MCF 10A (cell line): ENCODE measurements at regions of chr10 and their contacts with region 1.

Region 1: GRCh38 chr10:121886997-121887622 is 40.7 kb downstream of the ATE1 start:
- DNase-seq: peak; percentile 74
- H3K4me3 Mint-ChIP-seq: no peak overlapping the region
- H3K27ac Mint-ChIP-seq: peak overlapping the region; percentile 22
- H3K4me1 Mint-ChIP-seq: peaks cover 5% of the 10 kb centered on the region
- H3K27me3 Mint-ChIP-seq: no peaks in the 10 kb centered on the region
- CTCF ChIP-seq: peak; percentile 84

Region 2: GRCh38 chr10:120942806-120943413 is 944.2 kb before region 1 on chr10:
- CTCF ChIA-PET with region 1: interaction called, 50 read pairs
- POLR2A ChIA-PET with region 1: no interaction called
- intact Hi-C with region 1: loop called (anchors 1 kb)
- DNase-seq: peak; percentile 77
- H3K4me3 Mint-ChIP-seq: no peak overlapping the region
- H3K27ac Mint-ChIP-seq: no peak overlapping the region
- H3K4me1 Mint-ChIP-seq: peaks cover 10% of the 10 kb centered on the region
- H3K27me3 Mint-ChIP-seq: no peaks in the 10 kb centered on the region
- CTCF ChIP-seq: peak; percentile 93

Region 3: DNA sequence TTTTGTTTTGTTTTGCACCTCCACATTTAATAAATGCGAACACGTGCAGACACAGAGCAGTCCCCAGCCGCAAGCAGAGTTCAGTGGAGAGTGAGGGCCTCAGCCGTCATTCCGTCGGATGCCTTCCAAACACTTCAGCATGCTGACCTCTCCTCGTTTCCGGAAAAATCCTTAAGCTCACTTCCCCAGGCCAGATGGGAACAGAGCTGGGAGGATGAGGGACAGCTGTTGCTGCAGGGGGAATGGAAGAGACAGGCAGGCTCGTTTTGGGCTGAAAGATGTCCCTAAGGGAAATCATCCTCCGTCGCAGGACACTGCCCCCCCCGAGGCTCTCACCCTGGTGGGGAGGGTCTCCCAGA is 271.7 kb before region 1 on chr10:
- CTCF ChIA-PET with region 1: interaction called, 3 read pairs
- POLR2A ChIA-PET with region 1: no interaction called
- intact Hi-C with region 1: loop called (anchors 10 kb)
- DNase-seq: no peak
- H3K4me3 Mint-ChIP-seq: no peak overlapping the region
- H3K27ac Mint-ChIP-seq: no peak overlapping the region
- H3K4me1 Mint-ChIP-seq: peaks cover 13% of the 10 kb centered on the region
- H3K27me3 Mint-ChIP-seq: no peaks in the 10 kb centered on the region
- CTCF ChIP-seq: no peak

Region 4: DNA sequence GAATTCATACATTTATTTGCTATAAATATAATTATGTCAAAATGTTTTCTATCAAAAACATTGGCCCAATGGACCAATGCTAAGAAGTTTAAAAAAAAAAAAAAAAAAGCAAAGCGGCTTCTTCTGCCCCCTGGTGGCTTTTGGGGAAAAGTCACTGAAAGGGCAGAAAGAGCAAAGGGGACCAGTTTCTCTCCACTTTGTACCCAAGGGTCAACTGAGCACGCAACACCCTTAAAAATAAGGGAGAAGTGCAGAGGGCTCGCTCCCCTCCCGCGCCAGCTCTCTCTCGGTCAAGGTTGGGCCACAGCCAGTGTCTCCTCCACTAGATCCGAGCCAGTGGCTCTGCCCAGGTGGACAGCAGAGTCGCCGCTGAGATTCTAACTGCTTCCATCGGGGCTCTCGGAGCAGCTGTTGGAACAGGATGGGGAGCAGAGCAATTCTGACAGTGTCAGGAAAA is 152.5 kb before region 1 on chr10:
- CTCF ChIA-PET with region 1: interaction called, 4 read pairs
- POLR2A ChIA-PET with region 1: interaction called, 3 read pairs
- intact Hi-C with region 1: loop called (anchors 5 kb)
- DNase-seq: peak; percentile 57
- H3K4me3 Mint-ChIP-seq: no peak overlapping the region
- H3K27ac Mint-ChIP-seq: no peak overlapping the region
- H3K4me1 Mint-ChIP-seq: no peaks in the 10 kb centered on the region
- H3K27me3 Mint-ChIP-seq: no peaks in the 10 kb centered on the region
- CTCF ChIP-seq: peak; percentile 57

Region 5: GRCh38 chr10:121753726-121754476 is 133.2 kb before region 1 on chr10:
- CTCF ChIA-PET with region 1: interaction called, 3 read pairs
- POLR2A ChIA-PET with region 1: no interaction called
- intact Hi-C with region 1: loop called (anchors 5 kb)
- DNase-seq: peak; percentile 84
- H3K4me3 Mint-ChIP-seq: peak overlapping the region; percentile 10
- H3K27ac Mint-ChIP-seq: peak overlapping the region; percentile 81
- H3K4me1 Mint-ChIP-seq: peaks cover 12% of the 10 kb centered on the region
- H3K27me3 Mint-ChIP-seq: no peaks in the 10 kb centered on the region
- CTCF ChIP-seq: no peak

Region 6: GRCh38 chr10:121823993-121824463 is 63.1 kb before region 1 on chr10:
- CTCF ChIA-PET with region 1: interaction called, 7 read pairs
- POLR2A ChIA-PET with region 1: no interaction called
- intact Hi-C with region 1: loop called (anchors 5 kb)
- DNase-seq: peak; percentile 50
- H3K4me3 Mint-ChIP-seq: no peak overlapping the region
- H3K27ac Mint-ChIP-seq: no peak overlapping the region
- H3K4me1 Mint-ChIP-seq: no peaks in the 10 kb centered on the region
- H3K27me3 Mint-ChIP-seq: no peaks in the 10 kb centered on the region
- CTCF ChIP-seq: peak; percentile 64

Region 7: GRCh38 chr10:121900443-121901174 is 13.5 kb after region 1 on chr10:
- CTCF ChIA-PET with region 1: interaction called, 24 read pairs
- POLR2A ChIA-PET with region 1: interaction called, 4 read pairs
- intact Hi-C with region 1: no loop called
- DNase-seq: peak; percentile 69
- H3K4me3 Mint-ChIP-seq: no peak overlapping the region
- H3K27ac Mint-ChIP-seq: no peak overlapping the region
- H3K4me1 Mint-ChIP-seq: no peaks in the 10 kb centered on the region
- H3K27me3 Mint-ChIP-seq: no peaks in the 10 kb centered on the region
- CTCF ChIP-seq: peak; percentile 52

Region 8: GRCh38 chr10:122446668-122447423 is 559.7 kb after region 1 on chr10:
- CTCF ChIA-PET with region 1: no interaction called
- POLR2A ChIA-PET with region 1: no interaction called
- intact Hi-C with region 1: no loop called
- DNase-seq: peak; percentile 53
- H3K4me3 Mint-ChIP-seq: no peak overlapping the region
- H3K27ac Mint-ChIP-seq: no peak overlapping the region
- H3K4me1 Mint-ChIP-seq: peaks cover 13% of the 10 kb centered on the region
- H3K27me3 Mint-ChIP-seq: no peaks in the 10 kb centered on the region
- CTCF ChIP-seq: no peak

Region 9: GRCh38 chr10:122980209-122981065 is 1093.3 kb after region 1 on chr10 and contains the start of gene PSTK:
- CTCF ChIA-PET with region 1: no interaction called
- POLR2A ChIA-PET with region 1: no interaction called
- intact Hi-C with region 1: no loop called
- DNase-seq: peak; percentile 88
- H3K4me3 Mint-ChIP-seq: peak within 1 kb of the TSS; percentile 86
- H3K27ac Mint-ChIP-seq: peak within 1 kb of the TSS; percentile 84
- H3K4me1 Mint-ChIP-seq: peaks cover 20% of the 10 kb centered on the region
- H3K27me3 Mint-ChIP-seq: no peaks in the 10 kb centered on the region
- CTCF ChIP-seq: peak; percentile 93
- total RNA-seq, gene PSTK: 6.5 and 8.3 TPM in 2 replicates